Activated B cell treated with CpG ODN at 0.5 μM for 24 hours (primary cell): ENCODE measurements at regions of chr16 and their contacts with region 1.

Region 1: GRCh38 chr16:31202414-31203375 is at the start of gene PYCARD:
- DNase-seq: peak; percentile 61
- ATAC-seq: peak; percentile 32
- H3K4me3 Mint-ChIP-seq: peak within 1 kb of the TSS; percentile 91
- H3K27ac Mint-ChIP-seq: peak within 1 kb of the TSS; percentile 86
- H3K4me1 Mint-ChIP-seq: peaks cover 56% of the 10 kb centered on the region
- H3K27me3 Mint-ChIP-seq: no peaks in the 10 kb centered on the region
- CTCF ChIP-seq: no peak
- total RNA-seq, gene PYCARD: 21.7 and 27.8 TPM in 2 replicates

Region 2: GRCh38 chr16:30602616-30603277 is 599.9 kb before region 1 on chr16:
- CTCF ChIA-PET with region 1: no interaction called
- POLR2A ChIA-PET with region 1: no interaction called
- intact Hi-C with region 1: no loop called
- DNase-seq: no peak
- ATAC-seq: no peak
- H3K4me3 Mint-ChIP-seq: no peak overlapping the region
- H3K27ac Mint-ChIP-seq: no peak overlapping the region
- H3K4me1 Mint-ChIP-seq: peaks cover 3% of the 10 kb centered on the region
- H3K27me3 Mint-ChIP-seq: no peaks in the 10 kb centered on the region
- CTCF ChIP-seq: no peak

Region 3: GRCh38 chr16:31022544-31023251 is 180.0 kb before region 1 on chr16:
- CTCF ChIA-PET with region 1: no interaction called
- POLR2A ChIA-PET with region 1: no interaction called
- intact Hi-C with region 1: no loop called
- DNase-seq: no peak
- ATAC-seq: no peak
- H3K4me3 Mint-ChIP-seq: no peak overlapping the region
- H3K27ac Mint-ChIP-seq: no peak overlapping the region
- H3K4me1 Mint-ChIP-seq: no peaks in the 10 kb centered on the region
- H3K27me3 Mint-ChIP-seq: no peaks in the 10 kb centered on the region
- CTCF ChIP-seq: no peak

Region 4: GRCh38 chr16:31188450-31189411 is 14.0 kb before region 1 on chr16:
- CTCF ChIA-PET with region 1: interaction called, 3 read pairs
- POLR2A ChIA-PET with region 1: interaction called, 11 read pairs
- intact Hi-C with region 1: no loop called
- DNase-seq: no peak
- ATAC-seq: no peak
- H3K4me3 Mint-ChIP-seq: no peak overlapping the region
- H3K27ac Mint-ChIP-seq: no peak overlapping the region
- H3K4me1 Mint-ChIP-seq: peaks cover 41% of the 10 kb centered on the region
- H3K27me3 Mint-ChIP-seq: no peaks in the 10 kb centered on the region
- CTCF ChIP-seq: no peak

Region 5: DNA sequence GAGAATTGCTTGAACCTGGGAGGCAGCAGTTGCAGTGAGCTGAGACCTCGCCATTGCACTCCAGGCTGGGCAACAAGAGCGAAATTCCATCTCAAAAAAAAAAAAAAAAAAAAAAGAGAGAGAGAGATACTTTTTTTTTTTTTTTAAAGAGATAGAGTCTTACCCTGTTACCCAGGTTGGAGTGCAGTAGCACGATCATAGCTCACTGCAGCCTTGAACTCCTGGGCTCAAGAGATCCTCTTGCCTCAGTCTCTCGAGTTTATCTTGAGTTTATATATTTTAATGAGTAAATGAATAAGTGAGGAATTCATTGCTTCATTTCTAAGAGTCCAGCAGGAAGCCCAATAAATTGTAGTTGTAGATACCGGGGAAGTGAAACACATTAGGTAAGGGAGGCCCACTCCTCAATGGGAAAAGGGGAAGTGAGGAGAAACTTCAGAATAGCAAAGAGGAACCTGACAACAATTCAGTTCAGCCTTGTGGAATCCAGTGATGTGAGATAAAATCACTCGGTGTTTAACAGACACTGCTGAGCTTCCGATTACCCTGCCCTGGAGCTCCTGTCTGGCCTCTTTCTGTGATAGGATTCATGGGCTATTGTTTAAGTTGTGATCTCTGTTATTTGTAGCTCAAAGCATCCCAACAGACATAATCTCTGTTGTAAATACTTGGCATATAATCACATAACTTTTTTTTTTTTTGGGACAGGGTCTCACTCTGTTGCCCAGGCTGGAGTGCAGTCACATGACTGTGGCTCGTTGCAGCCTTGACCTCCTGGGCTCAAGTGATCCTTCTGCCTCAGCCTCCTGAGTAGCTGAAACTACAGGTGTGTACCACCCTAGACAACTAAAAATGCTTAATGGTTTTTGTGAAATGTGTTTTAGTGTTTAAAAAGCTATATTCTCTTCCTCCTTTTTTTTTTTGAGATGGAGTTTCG is 41.3 kb after region 1 on chr16:
- CTCF ChIA-PET with region 1: no interaction called
- POLR2A ChIA-PET with region 1: interaction called, 4 read pairs
- intact Hi-C with region 1: loop called (anchors 5 kb)
- DNase-seq: no peak
- ATAC-seq: peak; percentile 89
- H3K4me3 Mint-ChIP-seq: peak overlapping the region; percentile 1
- H3K27ac Mint-ChIP-seq: peak overlapping the region; percentile 3
- H3K4me1 Mint-ChIP-seq: peaks cover 16% of the 10 kb centered on the region
- H3K27me3 Mint-ChIP-seq: no peaks in the 10 kb centered on the region
- CTCF ChIP-seq: no peak

Region 6: GRCh38 chr16:31265329-31266245 is 62.9 kb after region 1 on chr16:
- CTCF ChIA-PET with region 1: no interaction called
- POLR2A ChIA-PET with region 1: interaction called, 22 read pairs
- intact Hi-C with region 1: no loop called
- DNase-seq: peak; percentile 68
- ATAC-seq: peak; percentile 93
- H3K4me3 Mint-ChIP-seq: peak overlapping the region; percentile 72
- H3K27ac Mint-ChIP-seq: peak overlapping the region; percentile 85
- H3K4me1 Mint-ChIP-seq: peaks cover 76% of the 10 kb centered on the region
- H3K27me3 Mint-ChIP-seq: no peaks in the 10 kb centered on the region
- CTCF ChIP-seq: no peak

Region 7: DNA sequence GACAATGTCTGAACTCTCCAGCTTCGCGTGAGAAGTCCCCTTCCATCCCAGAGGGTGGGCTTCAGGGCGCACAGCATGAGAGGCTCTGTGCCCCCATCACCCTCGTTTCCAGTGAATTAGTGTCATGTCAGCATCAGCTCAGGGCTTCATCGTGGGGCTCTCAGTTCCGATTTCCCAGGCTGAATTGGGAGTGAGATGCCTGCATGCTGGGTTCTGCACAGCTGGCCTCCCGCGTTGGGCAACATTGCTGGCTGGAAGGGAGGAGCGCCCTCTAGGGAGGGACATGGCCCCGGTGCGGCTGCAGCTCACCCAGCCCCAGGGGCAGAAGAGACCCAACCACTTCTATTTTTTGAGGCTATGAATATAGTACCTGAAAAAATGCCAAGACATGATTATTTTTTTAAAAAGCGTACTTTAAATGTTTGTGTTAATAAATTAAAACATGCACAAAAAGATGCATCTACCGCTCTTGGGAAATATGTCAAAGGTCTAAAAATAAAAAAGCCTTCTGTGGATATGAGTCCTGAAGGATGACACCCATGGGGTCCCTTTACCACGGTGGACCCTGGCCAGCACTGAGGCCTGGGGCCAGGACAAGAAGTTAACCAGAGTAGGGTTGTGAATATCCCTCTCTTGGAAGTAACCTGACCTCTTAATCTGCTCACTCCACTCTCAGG is 179.9 kb after region 1 on chr16:
- CTCF ChIA-PET with region 1: interaction called, 7 read pairs
- POLR2A ChIA-PET with region 1: interaction called, 15 read pairs
- intact Hi-C with region 1: loop called (anchors 1 kb)
- DNase-seq: peak; percentile 50
- ATAC-seq: peak; percentile 86
- H3K4me3 Mint-ChIP-seq: no peak overlapping the region
- H3K27ac Mint-ChIP-seq: no peak overlapping the region
- H3K4me1 Mint-ChIP-seq: peaks cover 11% of the 10 kb centered on the region
- H3K27me3 Mint-ChIP-seq: peaks cover 2% of the 10 kb centered on the region
- CTCF ChIP-seq: no peak